Activated CD4-positive, alpha-beta T cell treated with anti-CD3 and anti-CD28 coated beads, Interleukin-2, amount 10 ng/mL, durations not matched to agents 24 days and 14 days (primary cell): ENCODE measurements at regions of chr14 and their contacts with region 1.

Region 1: DNA sequence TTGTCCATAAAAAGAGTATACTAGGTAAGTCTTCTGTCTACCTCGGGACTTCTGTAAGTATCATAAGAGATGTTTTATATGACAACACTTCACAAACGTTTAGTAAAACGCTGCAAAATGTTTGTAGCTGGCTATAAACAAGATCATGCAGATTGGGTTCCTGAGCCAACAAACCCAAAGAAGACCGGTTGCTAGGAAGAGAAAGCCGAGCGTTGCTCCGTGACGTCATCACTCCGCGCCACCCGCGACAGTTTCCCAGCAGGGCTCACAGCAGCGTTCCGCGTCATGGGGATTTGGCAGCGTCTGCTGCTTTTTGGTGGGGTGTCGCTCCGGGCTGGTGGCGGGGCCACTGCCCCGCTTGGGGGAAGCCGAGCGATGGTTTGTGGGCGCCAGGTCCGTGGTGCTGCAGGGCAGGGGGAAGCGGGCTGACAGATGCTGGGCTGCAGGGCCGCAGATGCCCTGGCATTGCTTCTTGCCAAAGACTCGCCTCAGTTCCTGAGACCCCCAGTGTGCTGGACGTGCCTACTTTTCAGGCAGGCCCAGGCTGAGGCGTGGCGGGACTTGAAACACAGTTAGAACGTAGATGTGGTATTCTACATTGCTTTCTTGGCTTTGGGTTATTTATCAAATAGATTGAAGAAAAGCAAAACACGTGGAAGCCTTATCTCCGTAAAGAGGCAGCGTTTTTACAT is at the start of gene NUBPL:
- DNase-seq: peak; percentile 99
- H3K4me3 Mint-ChIP-seq: peak within 1 kb of the TSS; percentile 95
- H3K27ac Mint-ChIP-seq: peak within 1 kb of the TSS; percentile 97
- H3K4me1 Mint-ChIP-seq: peaks cover 16% of the 10 kb centered on the region
- H3K27me3 Mint-ChIP-seq: peaks cover 12% of the 10 kb centered on the region
- total RNA-seq, gene NUBPL: 12.1 and 12.3 TPM in 2 replicates

Region 2: GRCh38 chr14:31456841-31457664 is 104.2 kb before region 1 on chr14 and contains the start of gene DTD2:
- intact Hi-C with region 1: loop called (anchors 1 kb)
- DNase-seq: peak; percentile 97
- H3K4me3 Mint-ChIP-seq: peak within 1 kb of the TSS; percentile 95
- H3K27ac Mint-ChIP-seq: peak within 1 kb of the TSS; percentile 98
- H3K4me1 Mint-ChIP-seq: peaks cover 24% of the 10 kb centered on the region
- H3K27me3 Mint-ChIP-seq: peaks cover 4% of the 10 kb centered on the region
- total RNA-seq, gene DTD2: 30.8 and 32.2 TPM in 2 replicates

Region 3: GRCh38 chr14:31572955-31573354 is 11.7 kb after region 1 on chr14:
- intact Hi-C with region 1: no loop called
- DNase-seq: no peak
- H3K4me3 Mint-ChIP-seq: no peak overlapping the region
- H3K27ac Mint-ChIP-seq: no peak overlapping the region
- H3K4me1 Mint-ChIP-seq: peaks cover 5% of the 10 kb centered on the region
- H3K27me3 Mint-ChIP-seq: no peaks in the 10 kb centered on the region

Region 4: GRCh38 chr14:31945074-31945613 is 383.8 kb after region 1 on chr14:
- intact Hi-C with region 1: loop called (anchors 10 kb)
- DNase-seq: peak; percentile 71
- H3K4me3 Mint-ChIP-seq: peak overlapping the region; percentile 36
- H3K27ac Mint-ChIP-seq: no peak overlapping the region
- H3K4me1 Mint-ChIP-seq: peaks cover 17% of the 10 kb centered on the region
- H3K27me3 Mint-ChIP-seq: peaks cover 6% of the 10 kb centered on the region